Posterior vena cava (tissue), 2 donors: ENCODE measurements at regions of chr12 and their contacts with region 1.

Region 1: GRCh38 chr12:130093380-130093779 is 68.9 kb upstream of the FZD10 start:
- DNase-seq: no peak

Region 2: GRCh38 chr12:130335517-130336392 is 242.4 kb after region 1 on chr12:
- intact Hi-C with region 1: no loop called
- DNase-seq: no peak

Region 3: DNA sequence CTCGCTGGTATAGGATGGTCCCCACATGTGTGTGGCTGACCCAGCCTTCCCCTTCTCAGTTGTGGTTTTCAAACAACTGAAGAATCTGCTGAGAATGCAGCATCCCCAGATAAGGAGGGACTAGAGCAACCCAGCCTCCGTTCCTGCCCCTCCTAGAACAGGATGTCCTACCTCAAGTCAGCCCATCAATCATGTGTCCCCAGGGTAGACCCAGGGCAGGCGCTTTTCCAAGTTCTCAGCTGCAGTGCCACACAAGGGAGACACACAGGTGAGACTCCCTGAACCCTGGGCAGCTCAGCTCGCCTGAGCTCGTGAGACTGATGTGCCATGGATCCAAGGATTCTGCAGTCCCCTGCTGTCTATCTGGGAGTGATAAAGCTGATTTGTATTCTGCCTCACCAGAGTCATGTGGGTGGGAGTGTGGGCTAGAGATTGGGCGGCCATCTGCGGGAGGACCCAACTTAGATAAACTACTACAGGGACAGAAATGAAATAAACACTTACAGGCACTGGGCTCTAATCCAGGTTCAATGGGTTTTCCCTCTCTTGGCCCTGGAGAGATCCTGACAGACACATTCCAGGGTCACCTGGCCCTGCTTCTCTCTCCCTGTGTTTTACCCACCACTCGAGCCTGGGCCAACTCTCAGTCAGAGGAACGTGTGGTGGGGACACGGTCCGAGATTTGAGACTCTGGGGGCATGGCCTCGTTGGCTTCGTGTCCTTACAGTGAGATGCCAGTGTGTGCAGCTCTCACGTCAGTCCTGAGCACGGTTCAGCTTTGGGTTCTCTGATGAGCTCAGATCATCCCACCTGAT is 1314.0 kb after region 1 on chr12:
- intact Hi-C with region 1: loop called in 1 of 2 experiments (anchors 5 kb)
- DNase-seq: no peak